Endothelial cell of umbilical vein (primary cell): ENCODE measurements at regions of chr12 and their contacts with region 1.

Region 1: DNA sequence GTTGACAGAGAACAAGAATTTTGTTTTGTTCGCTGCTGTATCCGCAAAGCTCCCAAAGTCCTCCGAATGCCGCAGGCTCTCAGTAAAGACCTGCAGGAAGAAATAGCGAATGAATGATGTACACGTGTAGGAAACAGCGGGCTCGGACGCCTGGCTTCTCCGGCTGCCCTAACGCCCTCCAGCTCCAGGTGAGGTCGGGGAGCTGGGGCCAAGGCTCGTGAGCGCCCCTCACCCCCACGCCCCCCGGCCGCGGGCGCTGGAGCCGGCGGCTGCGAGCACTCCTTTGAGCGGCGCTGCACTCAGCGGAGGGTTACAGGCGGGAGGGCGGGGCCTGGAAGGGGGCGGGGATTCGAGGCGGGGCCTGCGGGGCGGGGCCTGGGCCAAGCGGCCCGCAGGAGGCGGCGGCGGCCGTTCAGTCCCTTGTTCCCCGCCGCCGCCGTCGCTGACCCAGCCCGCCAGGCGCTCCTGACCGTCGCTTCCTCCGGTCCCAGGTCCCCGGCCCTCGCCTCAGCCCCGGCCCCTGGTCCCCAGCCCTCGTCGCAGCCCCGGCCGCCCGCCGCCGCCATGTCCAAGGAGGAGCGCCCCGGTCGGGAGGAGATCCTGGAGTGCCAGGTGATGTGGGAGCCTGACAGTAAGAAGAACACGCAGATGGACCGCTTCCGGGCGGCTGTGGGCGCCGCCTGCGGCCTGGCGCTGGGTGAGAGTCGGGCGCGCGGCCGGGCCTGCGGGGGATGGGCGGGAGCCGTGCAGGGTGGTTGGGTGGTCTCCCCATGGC is at the start of gene AACS:
- DNase-seq: peak; percentile 75
- H3K4me3 ChIP-seq: peak within 1 kb of the TSS; percentile 72 to 80 (median 78)
- H3K27ac ChIP-seq: no peak within 1 kb of the TSS
- H3K4me1 ChIP-seq: peaks cover 13% of the 10 kb centered on the region
- H3K27me3 ChIP-seq: peaks cover 0 to 3% of the 10 kb centered on the region in 2 experiments
- CTCF ChIP-seq: peak in 1 of 2 donors; percentile 1
- POLR2A ChIP-seq: peak; percentile 64
- total RNA-seq, gene AACS: 40.3 and 44.7 TPM in 2 replicates

Region 2: DNA sequence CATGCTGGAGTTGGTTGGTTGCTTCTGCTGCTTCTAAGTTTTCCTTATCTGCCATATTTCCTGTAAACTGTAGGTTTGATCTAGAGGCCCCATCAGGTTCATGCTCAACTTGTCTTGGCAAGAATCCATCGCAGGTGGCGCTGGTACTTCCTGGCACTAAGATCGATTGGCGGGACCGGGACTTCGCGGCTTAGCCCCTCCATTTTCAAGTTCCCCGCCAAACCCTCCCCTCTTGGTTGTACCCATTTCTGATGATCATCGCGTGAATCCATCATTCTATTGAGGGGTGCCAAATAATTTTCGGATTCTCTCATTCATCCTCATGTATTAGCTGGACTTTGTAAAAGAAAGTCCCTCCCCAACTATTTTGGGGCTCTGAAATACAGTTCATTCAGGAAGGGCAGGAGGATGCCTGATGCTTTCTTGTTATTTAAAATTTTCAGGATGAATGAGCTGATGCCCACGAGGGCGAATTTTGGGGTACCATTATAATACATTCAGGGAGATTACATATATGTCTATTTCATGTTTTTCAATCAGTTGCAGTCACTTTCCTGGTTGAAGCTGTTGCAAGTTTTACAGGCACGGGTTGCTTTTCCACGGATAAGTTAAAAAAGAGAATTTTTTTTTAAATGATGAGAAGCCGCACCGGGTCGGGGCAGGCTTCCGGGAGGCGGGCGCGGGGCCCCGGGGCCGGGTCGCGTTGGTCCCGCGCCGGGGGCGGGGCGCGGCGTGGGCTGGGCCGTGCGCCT is 72.2 kb before region 1 on chr12:
- CTCF ChIA-PET with region 1: no interaction called
- POLR2A ChIA-PET with region 1: no interaction called
- dilution Hi-C with region 1: no loop called
- intact Hi-C with region 1: loop called (anchors 2 kb)
- DNase-seq: peak; percentile 52
- H3K4me3 ChIP-seq: peak overlapping the region; percentile 54 to 79 (median 78)
- H3K27ac ChIP-seq: no peak overlapping the region
- H3K4me1 ChIP-seq: peaks cover 23% of the 10 kb centered on the region
- H3K27me3 ChIP-seq: no peaks in the 10 kb centered on the region
- CTCF ChIP-seq: peak in 1 of 2 donors; percentile 20
- POLR2A ChIP-seq: no peak

Region 3: GRCh38 chr12:125049093-125049458 is 16.1 kb before region 1 on chr12:
- CTCF ChIA-PET with region 1: interaction called, 6 read pairs
- POLR2A ChIA-PET with region 1: no interaction called
- dilution Hi-C with region 1: no loop called
- intact Hi-C with region 1: loop called (anchors 1 kb)
- DNase-seq: no peak
- H3K4me3 ChIP-seq: peak overlapping the region; percentile 59 to 90 (median 72)
- H3K27ac ChIP-seq: no peak overlapping the region
- H3K4me1 ChIP-seq: peaks cover 4% of the 10 kb centered on the region
- H3K27me3 ChIP-seq: no peaks in the 10 kb centered on the region
- CTCF ChIP-seq: no peak
- POLR2A ChIP-seq: no peak

Region 4: DNA sequence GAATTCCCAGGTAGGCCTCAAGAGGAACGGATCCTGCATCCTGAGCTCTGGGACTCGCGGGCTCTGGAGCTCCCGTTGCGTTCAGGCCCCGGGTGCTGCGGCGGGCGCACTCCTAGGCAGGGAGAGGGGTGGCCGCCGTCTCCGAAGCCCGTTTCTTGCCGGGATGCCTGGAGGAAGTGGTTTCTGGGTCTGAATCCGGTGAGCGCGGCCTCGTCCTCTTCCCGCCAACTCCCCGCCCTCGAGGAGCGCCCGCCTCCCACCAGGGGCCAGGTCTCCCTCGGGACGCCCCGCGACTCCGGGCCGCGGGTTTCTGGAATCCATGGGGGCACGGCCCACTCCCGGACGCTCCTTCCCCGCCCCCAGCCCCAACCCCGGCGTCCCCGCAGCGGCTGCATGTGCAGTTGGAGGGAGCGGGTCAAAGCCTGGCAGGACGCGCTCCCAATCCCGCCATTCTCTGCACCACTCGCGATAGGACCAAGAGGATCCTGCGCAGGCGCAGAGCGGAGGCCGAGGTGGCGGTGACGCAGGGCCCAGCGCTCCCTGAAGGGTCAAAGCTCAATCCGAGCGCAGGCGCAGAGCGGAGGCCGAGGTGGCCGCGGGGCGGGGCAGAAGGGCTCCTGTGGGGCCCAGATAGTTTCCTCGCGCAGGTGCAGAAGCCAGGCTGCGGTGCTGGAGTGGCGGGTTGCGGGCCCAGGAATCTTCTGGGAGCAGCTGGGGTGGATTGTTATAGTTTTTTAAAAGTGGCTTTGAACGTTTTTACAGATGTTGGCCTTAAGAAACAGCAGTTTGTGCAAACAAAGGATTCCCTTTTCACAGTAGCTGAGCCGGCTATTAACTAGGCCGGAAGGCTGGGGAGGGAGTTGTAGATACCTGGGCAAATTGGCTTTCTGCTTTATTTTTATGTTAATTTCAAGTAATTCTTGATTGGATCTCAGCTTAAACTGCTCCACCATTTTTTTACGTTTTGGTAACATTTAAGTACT is 796.4 kb after region 1 on chr12:
- CTCF ChIA-PET with region 1: no interaction called
- POLR2A ChIA-PET with region 1: no interaction called
- dilution Hi-C with region 1: no loop called
- intact Hi-C with region 1: no loop called
- DNase-seq: no peak
- H3K4me3 ChIP-seq: no peak overlapping the region
- H3K27ac ChIP-seq: no peak overlapping the region
- H3K4me1 ChIP-seq: no peaks in the 10 kb centered on the region
- H3K27me3 ChIP-seq: no peaks in the 10 kb centered on the region
- CTCF ChIP-seq: no peak
- POLR2A ChIP-seq: no peak